Naive thymus-derived CD4-positive, alpha-beta T cell (primary cell): ENCODE measurements at regions of chr10 and their contacts with region 1.

Region 1: GRCh38 chr10:110864662-110865140 is 7.0 kb upstream of the PDCD4 start:
- DNase-seq: peak in 7 of 9 donors; percentile 73 to 92 (median 88)
- ATAC-seq: peak; percentile 81
- H3K4me3 ChIP-seq: peak overlapping the region; percentile 46
- H3K4me3 Mint-ChIP-seq: peak overlapping the region; percentile 72 to 88 (median 80)
- H3K27ac ChIP-seq: peak overlapping the region; percentile 100
- H3K27ac Mint-ChIP-seq: peak overlapping the region; percentile 92 to 100 (median 99)
- H3K4me1 ChIP-seq: peaks cover 97 to 98% of the 10 kb centered on the region in 2 donors
- H3K4me1 Mint-ChIP-seq: peaks cover 81 to 100% (median 98%) of the 10 kb centered on the region in 7 donors
- H3K27me3 ChIP-seq: no peaks in the 10 kb centered on the region
- H3K27me3 Mint-ChIP-seq: no peaks in the 10 kb centered on the region

Region 2: GRCh38 chr10:109922976-109923921 is 941.5 kb before region 1 on chr10 and contains the start of gene XPNPEP1:
- CTCF ChIA-PET with region 1: no interaction called
- POLR2A ChIA-PET with region 1: no interaction called
- intact Hi-C with region 1: loop called in 1 of 2 experiments (anchors 10 kb)
- DNase-seq: peak; percentile 55 to 90 (median 66)
- ATAC-seq: peak; percentile 98
- H3K4me3 ChIP-seq: peak within 1 kb of the TSS; percentile 67
- H3K4me3 Mint-ChIP-seq: peak within 1 kb of the TSS; percentile 78 to 94 (median 90)
- H3K27ac ChIP-seq: peak within 1 kb of the TSS; percentile 83
- H3K27ac Mint-ChIP-seq: peak within 1 kb of the TSS; percentile 75 to 95 (median 89)
- H3K4me1 ChIP-seq: peaks cover 30 to 39% of the 10 kb centered on the region in 2 donors
- H3K4me1 Mint-ChIP-seq: peaks cover 36 to 58% (median 54%) of the 10 kb centered on the region in 7 donors
- H3K27me3 ChIP-seq: no peaks in the 10 kb centered on the region
- H3K27me3 Mint-ChIP-seq: peaks cover 0 to 16% (median 0%) of the 10 kb centered on the region in 5 donors
- total RNA-seq, gene XPNPEP1: 44.1 to 100 (median 60.7) TPM

Region 3: DNA sequence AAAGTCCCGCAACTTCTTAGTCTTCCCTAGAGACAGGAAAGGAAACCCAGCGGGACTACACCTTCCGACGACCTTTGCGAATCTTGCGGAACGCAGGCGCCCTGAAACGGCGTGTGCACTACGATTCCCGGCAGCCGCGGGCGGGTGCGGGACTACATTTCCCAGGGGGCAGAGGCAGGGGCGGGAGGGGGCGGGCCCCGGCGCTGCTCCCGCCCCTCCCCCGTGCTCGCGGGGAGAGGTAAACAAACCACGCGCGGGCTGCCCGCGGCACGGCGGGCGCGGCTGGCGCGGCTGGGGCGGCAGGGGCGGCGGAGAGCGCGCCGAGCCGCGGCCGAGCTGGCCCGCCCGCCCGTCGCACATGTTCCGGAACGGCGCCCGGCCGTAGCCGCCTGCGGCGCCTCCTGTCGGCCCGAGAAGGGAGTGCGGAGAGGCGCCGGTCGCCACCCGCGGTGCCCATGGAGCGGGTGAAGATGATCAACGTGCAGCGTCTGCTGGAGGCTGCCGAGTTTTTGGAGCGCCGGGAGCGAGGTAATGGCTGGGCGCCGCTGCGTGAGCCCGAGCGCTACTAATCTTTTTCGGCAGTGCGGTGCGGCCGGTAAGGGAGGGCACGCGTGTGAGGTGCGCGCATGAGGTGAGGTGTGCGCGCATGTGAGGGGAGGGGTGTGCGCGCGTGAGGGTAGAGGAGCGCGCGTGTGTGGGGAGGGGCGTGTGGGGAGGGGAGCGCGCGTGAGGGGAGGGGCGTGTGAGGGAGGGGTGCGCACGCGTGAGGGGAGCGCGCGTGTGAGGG is 638.8 kb before region 1 on chr10:
- CTCF ChIA-PET with region 1: no interaction called
- POLR2A ChIA-PET with region 1: interaction called, 3 read pairs
- intact Hi-C with region 1: loop called in 1 of 2 experiments (anchors 5 kb)
- DNase-seq: peak; percentile 83 to 91 (median 88)
- ATAC-seq: peak; percentile 73
- H3K4me3 ChIP-seq: peak overlapping the region; percentile 75
- H3K4me3 Mint-ChIP-seq: peak overlapping the region; percentile 87 to 99 (median 94)
- H3K27ac ChIP-seq: peak overlapping the region; percentile 92
- H3K27ac Mint-ChIP-seq: peak overlapping the region; percentile 78 to 97 (median 96)
- H3K4me1 ChIP-seq: peaks cover 16 to 27% of the 10 kb centered on the region in 2 donors
- H3K4me1 Mint-ChIP-seq: peaks cover 27 to 68% (median 49%) of the 10 kb centered on the region in 7 donors
- H3K27me3 ChIP-seq: no peaks in the 10 kb centered on the region
- H3K27me3 Mint-ChIP-seq: no peaks in the 10 kb centered on the region

Region 4: GRCh38 chr10:110567201-110568054 is 297.3 kb before region 1 on chr10 and contains the start of gene SMC3:
- CTCF ChIA-PET with region 1: no interaction called
- POLR2A ChIA-PET with region 1: no interaction called
- intact Hi-C with region 1: loop called in 1 of 2 experiments (anchors 5 kb)
- DNase-seq: peak; percentile 82 to 96 (median 94)
- ATAC-seq: peak; percentile 94
- H3K4me3 ChIP-seq: peak within 1 kb of the TSS; percentile 88
- H3K4me3 Mint-ChIP-seq: peak within 1 kb of the TSS; percentile 91 to 99 (median 96)
- H3K27ac ChIP-seq: peak within 1 kb of the TSS; percentile 88
- H3K27ac Mint-ChIP-seq: peak within 1 kb of the TSS; percentile 96 to 99 (median 97)
- H3K4me1 ChIP-seq: peaks cover 20 to 21% of the 10 kb centered on the region in 2 donors
- H3K4me1 Mint-ChIP-seq: peaks cover 21 to 45% (median 38%) of the 10 kb centered on the region in 7 donors
- H3K27me3 ChIP-seq: no peaks in the 10 kb centered on the region
- H3K27me3 Mint-ChIP-seq: peaks cover 6 to 26% (median 14%) of the 10 kb centered on the region in 5 donors
- total RNA-seq, gene SMC3: 29.8 to 69.8 (median 48.5) TPM

Region 5: DNA sequence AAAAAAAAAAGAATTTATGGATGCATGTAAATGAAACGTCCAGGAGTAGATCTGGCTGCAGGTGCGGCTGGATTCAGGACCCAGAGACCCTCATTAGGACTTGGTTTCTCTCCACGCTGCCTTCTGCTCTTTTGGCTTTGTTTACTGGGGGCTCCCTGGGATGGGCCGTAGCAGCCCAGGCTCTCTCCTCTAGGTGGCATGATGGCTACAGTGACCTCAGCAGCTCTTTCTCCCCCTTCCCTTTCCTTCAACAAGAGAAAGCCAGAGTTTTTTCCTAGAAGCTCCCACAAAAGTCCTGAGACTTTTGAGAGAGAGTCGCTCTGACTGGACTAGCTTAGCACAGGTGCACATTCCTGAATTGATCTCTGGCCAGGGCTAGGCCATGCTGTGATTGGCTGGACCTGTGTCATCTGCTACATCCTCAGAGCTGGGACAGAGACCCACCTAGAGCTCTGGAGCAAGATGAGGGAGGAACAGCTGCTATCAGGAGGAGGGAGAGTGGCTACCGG is 60.8 kb before region 1 on chr10:
- CTCF ChIA-PET with region 1: interaction called, 22 read pairs
- POLR2A ChIA-PET with region 1: interaction called, 46 read pairs
- intact Hi-C with region 1: loop called (anchors 2 kb)
- DNase-seq: peak in 2 of 9 donors; percentile 25 to 36
- ATAC-seq: peak; percentile 67
- H3K4me3 ChIP-seq: peak overlapping the region; percentile 29
- H3K4me3 Mint-ChIP-seq: peak overlapping the region in 9 of 10 donors; percentile 12 to 78 (median 69)
- H3K27ac ChIP-seq: peak overlapping the region; percentile 61
- H3K27ac Mint-ChIP-seq: peak overlapping the region; percentile 58 to 100 (median 93)
- H3K4me1 ChIP-seq: peaks cover 25 to 34% of the 10 kb centered on the region in 2 donors
- H3K4me1 Mint-ChIP-seq: peaks cover 30 to 53% (median 47%) of the 10 kb centered on the region in 7 donors
- H3K27me3 ChIP-seq: no peaks in the 10 kb centered on the region
- H3K27me3 Mint-ChIP-seq: no peaks in the 10 kb centered on the region

Region 6: GRCh38 chr10:110834629-110835301 is 29.9 kb before region 1 on chr10:
- CTCF ChIA-PET with region 1: interaction called, 16 read pairs
- POLR2A ChIA-PET with region 1: interaction called, 63 read pairs
- intact Hi-C with region 1: loop called in 1 of 2 experiments (anchors 2 kb)
- DNase-seq: peak in 7 of 9 donors; percentile 51 to 77 (median 69)
- ATAC-seq: peak; percentile 81
- H3K4me3 ChIP-seq: no peak overlapping the region
- H3K4me3 Mint-ChIP-seq: peak overlapping the region in 9 of 10 donors; percentile 13 to 84 (median 63)
- H3K27ac ChIP-seq: peak overlapping the region; percentile 66
- H3K27ac Mint-ChIP-seq: peak overlapping the region; percentile 82 to 98 (median 97)
- H3K4me1 ChIP-seq: peaks cover 0 to 39% of the 10 kb centered on the region in 2 donors
- H3K4me1 Mint-ChIP-seq: peaks cover 18 to 67% (median 45%) of the 10 kb centered on the region in 7 donors
- H3K27me3 ChIP-seq: no peaks in the 10 kb centered on the region
- H3K27me3 Mint-ChIP-seq: no peaks in the 10 kb centered on the region

Region 7: DNA sequence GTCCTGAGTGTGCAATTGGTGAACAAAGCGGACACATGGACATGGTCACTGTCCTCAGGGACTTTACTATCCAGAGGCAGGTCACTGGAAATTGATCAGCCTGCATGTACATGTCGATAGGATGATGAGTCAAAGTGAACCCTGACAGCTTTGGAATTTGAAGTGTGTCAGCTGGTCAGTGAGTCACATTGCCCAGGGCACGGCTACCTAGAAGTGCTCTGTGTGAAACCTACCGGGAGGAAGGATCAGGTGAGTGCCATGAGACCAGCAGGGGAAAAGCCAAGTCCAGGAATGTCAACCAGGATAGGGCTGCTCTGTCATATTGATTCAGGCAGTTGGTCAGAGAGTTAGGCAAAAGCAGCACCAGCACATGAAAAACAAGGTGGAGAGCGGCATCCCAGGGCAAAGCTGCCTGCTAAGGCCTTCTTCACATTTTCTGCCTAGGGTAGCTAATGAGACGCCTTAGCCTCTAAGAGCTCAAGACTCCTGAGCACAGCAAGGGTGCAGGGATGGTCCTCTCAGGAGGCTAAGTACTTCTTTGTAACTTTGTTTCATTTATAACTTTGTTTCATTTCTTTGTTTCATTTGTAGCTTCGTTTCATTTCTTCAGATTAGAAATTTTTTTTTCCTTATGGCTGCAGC is 12.3 kb before region 1 on chr10:
- CTCF ChIA-PET with region 1: interaction called, 7 read pairs
- POLR2A ChIA-PET with region 1: interaction called, 31 read pairs
- intact Hi-C with region 1: loop called in 1 of 2 experiments (anchors 1 kb)
- DNase-seq: peak in 1 of 9 donors; percentile 47
- ATAC-seq: no peak
- H3K4me3 ChIP-seq: no peak overlapping the region
- H3K4me3 Mint-ChIP-seq: peak overlapping the region; percentile 52 to 73 (median 62)
- H3K27ac ChIP-seq: peak overlapping the region; percentile 33
- H3K27ac Mint-ChIP-seq: peak overlapping the region; percentile 43 to 88 (median 78)
- H3K4me1 ChIP-seq: peaks cover 63 to 79% of the 10 kb centered on the region in 2 donors
- H3K4me1 Mint-ChIP-seq: peaks cover 46 to 81% (median 79%) of the 10 kb centered on the region in 7 donors
- H3K27me3 ChIP-seq: no peaks in the 10 kb centered on the region
- H3K27me3 Mint-ChIP-seq: no peaks in the 10 kb centered on the region